Left cardiac atrium (tissue), 4 donors: ENCODE measurements at regions of chr10 and their contacts with region 1.

Region 1: DNA sequence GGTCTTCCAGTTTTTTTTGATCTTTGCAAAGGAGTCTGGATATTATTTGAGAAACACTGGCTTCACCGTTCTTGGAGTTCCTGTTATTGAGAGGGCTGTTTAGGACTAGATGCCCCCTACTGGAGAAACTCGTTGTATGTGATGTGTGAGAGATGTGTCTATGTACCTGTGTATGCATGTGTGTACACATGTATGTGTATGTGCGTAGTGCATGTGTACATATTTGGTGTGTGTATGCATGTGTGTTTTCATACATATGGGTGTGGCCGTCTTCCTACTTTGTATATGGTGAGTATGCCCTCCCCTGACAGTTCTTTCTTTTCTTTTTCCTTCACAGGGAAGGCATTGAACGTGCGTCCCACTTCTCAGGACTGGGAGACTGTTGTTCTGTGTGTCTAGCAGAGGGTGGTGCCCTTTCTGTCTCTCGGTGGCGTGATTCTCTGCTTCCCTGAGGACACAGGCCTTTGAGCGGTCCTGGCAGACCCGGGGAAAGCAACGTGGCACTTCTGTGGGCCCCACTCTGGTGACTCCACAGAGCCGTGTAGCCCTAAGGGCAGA is 3.0 kb upstream of the CALHM3 start:
- DNase-seq: no peak
- ATAC-seq: peak; percentile 58 to 72

Region 2: GRCh38 chr10:103416436-103417147 is 65.5 kb before region 1 on chr10:
- intact Hi-C with region 1: loop called (anchors 2 to 5 kb)
- DNase-seq: peak; percentile 62
- ATAC-seq: peak; percentile 31 to 41

Region 3: GRCh38 chr10:103592186-103593021 is 110.4 kb after region 1 on chr10:
- intact Hi-C with region 1: no loop called
- DNase-seq: no peak
- ATAC-seq: peak in 1 of 2 donors; percentile 52